ENCODE measurements at regions of chr14 and their contacts with region 1.

Region 1: GRCh38 chr14:69574263-69574953 is at the start of gene CCDC177:
- H3K4me3 ChIP-seq: peak within 1 kb of the TSS; percentile 51
- H3K27ac ChIP-seq: peak within 1 kb of the TSS; percentile 37; the same call in 1 of the 2 replicates
- H3K4me1 ChIP-seq: peaks cover 3% of the 10 kb centered on the region
- CTCF ChIP-seq: peak; percentile 60

Region 2: GRCh38 chr14:69392481-69392880 is 181.9 kb before region 1 on chr14:
- CTCF ChIA-PET with region 1: no interaction called
- POLR2A ChIA-PET with region 1: no interaction called
- H3K4me3 ChIP-seq: no peak overlapping the region
- H3K27ac ChIP-seq: no peak overlapping the region
- H3K4me1 ChIP-seq: 0 out of 2 replicates have a peak, but pooled peaks cover 3% of the 10 kb centered on the region
- CTCF ChIP-seq: no peak

Region 3: DNA sequence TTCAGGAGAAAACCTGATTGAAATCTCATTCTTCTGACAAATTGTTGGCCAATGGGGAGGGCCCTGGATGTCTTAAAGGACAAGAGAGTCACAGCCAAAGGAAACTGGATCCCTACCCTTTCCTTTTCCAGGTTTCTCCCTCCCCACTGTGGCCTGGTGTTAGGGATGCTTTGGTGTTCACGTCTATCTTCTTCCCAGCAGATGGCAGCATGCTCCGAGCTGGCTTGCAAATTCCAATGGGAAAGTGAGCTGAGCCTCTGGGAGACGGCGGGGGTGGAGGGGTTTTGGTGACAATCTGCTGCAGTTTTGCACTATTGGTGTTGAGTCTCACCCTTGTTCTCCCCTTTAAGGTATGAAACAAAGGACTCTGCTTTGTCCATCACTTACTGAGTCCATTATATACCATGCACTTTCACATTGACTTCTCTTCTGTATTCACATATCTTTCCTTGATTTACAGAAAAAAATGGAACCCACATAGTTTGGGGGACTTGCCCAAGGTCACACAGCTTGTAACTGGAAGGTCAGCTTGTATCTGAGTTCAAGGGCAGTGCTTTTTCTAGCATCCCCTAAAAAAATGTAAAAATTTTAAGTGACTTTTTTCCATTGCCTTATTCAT is 39.1 kb before region 1 on chr14:
- CTCF ChIA-PET with region 1: interaction called, 14 read pairs
- POLR2A ChIA-PET with region 1: interaction called, 6 read pairs
- H3K4me3 ChIP-seq: no peak overlapping the region
- H3K27ac ChIP-seq: no peak overlapping the region
- H3K4me1 ChIP-seq: no peaks in the 10 kb centered on the region
- CTCF ChIP-seq: peak; percentile 20; the same call in 1 of the 2 replicates

Region 4: DNA sequence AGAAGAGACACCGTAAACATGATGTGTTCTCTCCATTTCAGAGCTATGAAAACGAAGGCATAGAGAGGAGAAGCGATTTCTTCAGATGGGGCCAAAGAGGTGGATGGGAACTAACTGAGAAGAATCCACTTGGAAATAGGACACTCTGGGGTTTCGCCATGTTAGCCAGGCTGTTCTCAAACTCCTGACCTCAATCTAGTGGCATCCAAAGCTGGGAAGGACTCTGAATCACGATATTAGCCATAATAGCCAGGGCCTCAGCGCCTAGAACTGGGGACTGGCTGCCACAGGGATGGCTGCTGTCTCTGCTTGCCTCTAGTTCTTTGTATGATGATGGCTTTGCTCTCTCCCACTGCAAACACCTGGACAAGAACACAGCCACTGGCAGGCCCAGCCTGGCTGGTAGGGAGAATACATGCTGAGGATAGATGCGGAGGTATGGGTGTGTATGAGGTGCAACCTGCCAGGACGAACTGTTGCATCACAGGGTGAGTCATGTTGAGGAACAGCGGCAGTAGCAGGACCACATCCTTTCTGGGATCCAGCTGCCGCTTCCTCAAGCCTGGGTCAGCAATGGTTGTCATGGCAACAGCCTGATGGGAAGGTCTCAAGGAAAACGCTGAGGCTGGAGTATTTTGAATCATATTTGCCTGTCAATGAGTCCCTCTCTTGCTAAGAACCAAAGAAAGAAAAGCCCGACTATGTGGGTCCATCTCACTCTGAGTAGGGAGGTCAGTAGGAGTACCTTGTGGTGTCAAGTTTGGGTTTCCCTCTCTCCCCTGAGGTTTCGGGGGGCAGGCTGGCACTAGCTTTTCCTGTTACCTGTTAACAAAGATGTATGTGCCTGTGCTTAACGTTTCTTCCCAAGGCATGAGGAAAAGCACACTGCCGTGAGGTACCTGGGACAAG is 30.8 kb before region 1 on chr14:
- CTCF ChIA-PET with region 1: interaction called, 31 read pairs
- POLR2A ChIA-PET with region 1: interaction called, 6 read pairs
- H3K4me3 ChIP-seq: no peak overlapping the region
- H3K27ac ChIP-seq: no peak overlapping the region
- H3K4me1 ChIP-seq: no peaks in the 10 kb centered on the region
- CTCF ChIP-seq: no peak

Region 5: GRCh38 chr14:69586404-69586803 is 12.0 kb after region 1 on chr14:
- CTCF ChIA-PET with region 1: interaction called, 15 read pairs
- POLR2A ChIA-PET with region 1: no interaction called
- H3K4me3 ChIP-seq: no peak overlapping the region
- H3K27ac ChIP-seq: no peak overlapping the region
- H3K4me1 ChIP-seq: no peaks in the 10 kb centered on the region
- CTCF ChIP-seq: no peak

Measured in HEK293 (cell line).